Heart left ventricle (tissue), 16 donors: ENCODE measurements at regions of chr2 and their contacts with region 1.

Region 1: DNA sequence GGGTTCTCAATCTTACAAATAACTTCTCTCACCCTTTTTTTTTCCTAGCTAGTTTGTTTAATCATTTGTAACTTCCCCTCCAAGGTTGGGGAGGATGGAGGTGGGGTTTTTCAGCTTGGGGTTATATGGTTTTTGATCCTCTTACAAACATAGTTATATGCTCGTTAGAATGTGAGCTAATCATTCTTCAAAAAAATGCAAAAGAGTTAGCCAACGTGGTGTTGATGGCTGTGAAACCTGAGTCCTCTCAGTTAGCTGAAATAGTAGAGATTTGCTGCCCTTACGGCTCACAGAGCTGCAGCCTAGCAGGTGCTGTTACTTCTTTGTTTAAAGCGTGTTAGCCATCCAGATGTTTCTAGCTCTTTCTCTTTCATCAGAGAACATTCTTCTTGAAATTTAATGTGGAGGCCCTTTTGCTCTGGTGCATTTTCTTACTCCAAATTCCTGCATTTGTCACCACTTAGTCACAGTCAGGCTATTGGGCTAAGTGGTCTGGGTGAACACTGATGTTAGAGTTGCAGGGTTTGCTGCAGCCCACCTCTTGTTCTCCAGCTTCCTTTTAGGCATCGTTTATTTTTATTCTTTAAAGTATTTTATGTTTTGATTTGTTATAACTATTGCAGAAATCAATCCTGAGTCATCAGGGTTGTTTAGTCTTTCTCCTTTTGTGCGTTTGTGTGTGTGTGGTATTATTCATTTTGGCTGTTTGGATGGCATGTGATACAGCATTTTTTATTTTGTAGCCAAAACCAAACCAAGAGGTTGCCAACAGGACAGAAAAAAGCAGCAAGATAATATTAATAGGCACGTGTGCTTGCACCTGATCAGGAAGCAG is 41.1 kb downstream of the LIMS1 start:
- DNase-seq: no peak
- ATAC-seq: no peak
- H3K4me3 ChIP-seq: no peak overlapping the region
- H3K27ac ChIP-seq: no peak overlapping the region
- H3K4me1 ChIP-seq: peaks cover 3 to 71% (median 37%) of the 10 kb centered on the region in 12 donors
- H3K27me3 ChIP-seq: no peaks in the 10 kb centered on the region
- CTCF ChIP-seq: no peak
- POLR2A ChIP-seq: no peak

Region 2: DNA sequence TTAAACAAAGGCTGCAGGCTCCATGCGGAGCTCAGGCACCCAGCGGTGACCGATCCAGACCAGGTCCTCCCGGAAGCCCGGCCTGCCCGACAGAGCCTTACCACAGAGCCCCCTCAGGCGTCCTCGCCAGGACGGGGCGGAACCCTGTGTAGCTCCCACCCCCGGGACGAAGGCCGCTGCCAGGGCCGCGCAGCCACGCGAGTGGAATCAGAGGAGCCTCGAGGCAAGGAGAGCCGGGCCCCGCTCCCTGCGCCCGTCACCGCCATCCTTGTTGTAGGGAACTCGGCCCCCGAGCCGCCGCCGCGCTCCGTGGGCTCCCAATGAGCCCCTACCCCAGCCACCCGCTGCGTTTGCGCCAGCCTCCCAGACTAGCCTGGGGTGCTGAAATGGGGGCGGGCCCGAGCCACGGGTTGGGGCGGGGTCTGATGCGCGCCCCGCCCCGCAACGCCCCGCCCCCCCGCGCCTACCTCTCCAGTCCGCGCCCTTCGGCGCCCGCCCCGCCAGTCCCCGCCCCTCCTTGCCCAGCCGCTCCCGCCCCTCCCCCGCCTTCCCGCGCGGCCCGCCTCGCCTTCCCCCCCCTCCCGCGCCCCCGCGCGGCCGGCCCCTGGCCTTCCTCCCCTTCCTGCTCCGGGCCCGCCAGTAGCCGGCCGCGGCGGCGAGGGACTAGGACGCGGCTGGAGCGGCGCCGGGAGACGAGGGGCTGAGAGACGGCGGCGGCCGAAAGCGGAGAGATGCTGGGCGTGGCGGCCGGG is 41.3 kb before region 1 on chr2 and contains the start of gene LIMS1:
- intact Hi-C with region 1: loop called in 8 of 10 experiments (anchors 2 to 10 kb)
- DNase-seq: peak; percentile 94 to 96 (median 95)
- ATAC-seq: peak; percentile 88 to 98 (median 98)
- H3K4me3 ChIP-seq: peak within 1 kb of the TSS; percentile 50 to 98 (median 77)
- H3K27ac ChIP-seq: peak within 1 kb of the TSS; percentile 58 to 94 (median 91)
- H3K4me1 ChIP-seq: peaks cover 0 to 31% (median 15%) of the 10 kb centered on the region in 12 donors
- H3K27me3 ChIP-seq: no peaks in the 10 kb centered on the region
- CTCF ChIP-seq: peak in 3 of 12 donors; percentile 14 to 27 (median 23)
- POLR2A ChIP-seq: peak; percentile 34 to 73
- total RNA-seq, gene LIMS1: 65.8 to 136 (median 82.3) TPM

Region 3: GRCh38 chr2:108553209-108553919 is 22.0 kb before region 1 on chr2:
- intact Hi-C with region 1: loop called in 1 of 10 experiments (anchors 1 kb)
- DNase-seq: peak in 1 of 5 donors; percentile 46
- ATAC-seq: peak in 3 of 4 donors; percentile 64 to 70 (median 64)
- H3K4me3 ChIP-seq: no peak overlapping the region
- H3K27ac ChIP-seq: peak overlapping the region; percentile 10 to 81 (median 52)
- H3K4me1 ChIP-seq: peaks cover 7 to 45% (median 34%) of the 10 kb centered on the region in 12 donors
- H3K27me3 ChIP-seq: no peaks in the 10 kb centered on the region
- CTCF ChIP-seq: no peak
- POLR2A ChIP-seq: no peak

Region 4: DNA sequence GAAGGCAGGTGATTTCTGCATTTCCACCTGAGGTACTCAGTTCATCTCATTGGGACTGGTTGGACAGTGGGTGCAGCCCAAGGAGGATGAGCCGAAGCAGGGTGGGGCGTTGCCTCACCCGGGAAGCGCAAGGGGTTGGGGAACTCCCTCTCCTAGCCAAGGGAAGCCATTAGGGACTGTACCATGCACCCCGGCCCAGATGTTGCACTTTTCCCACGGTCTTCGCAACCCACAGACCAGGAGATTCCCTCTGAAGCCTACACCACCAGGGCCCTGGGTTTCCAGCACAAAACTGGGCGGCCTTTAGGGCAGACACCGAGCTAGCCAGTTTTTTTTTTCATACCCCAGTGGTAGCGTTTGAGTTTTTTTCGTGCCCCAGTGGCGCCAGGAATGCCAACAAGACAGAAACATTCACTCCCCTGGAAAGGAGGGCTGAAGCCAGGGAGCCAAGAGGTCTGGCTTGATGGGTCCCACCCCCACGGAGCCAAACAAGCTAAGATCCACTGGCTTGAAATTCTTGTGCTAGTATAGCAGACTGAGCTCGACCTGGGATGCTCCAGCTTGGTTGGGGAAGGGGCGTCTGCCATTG is 68.0 kb after region 1 on chr2:
- intact Hi-C with region 1: no loop called
- DNase-seq: no peak
- ATAC-seq: peak in 2 of 4 donors; percentile 7 to 9
- H3K4me3 ChIP-seq: no peak overlapping the region
- H3K27ac ChIP-seq: peak overlapping the region in 6 of 12 donors; percentile 9 to 46 (median 26)
- H3K4me1 ChIP-seq: peaks cover 0 to 48% (median 23%) of the 10 kb centered on the region in 12 donors
- H3K27me3 ChIP-seq: no peaks in the 10 kb centered on the region
- CTCF ChIP-seq: no peak
- POLR2A ChIP-seq: no peak